ENCODE measurements at regions of chr10 and their contacts with region 1.

Region 1: DNA sequence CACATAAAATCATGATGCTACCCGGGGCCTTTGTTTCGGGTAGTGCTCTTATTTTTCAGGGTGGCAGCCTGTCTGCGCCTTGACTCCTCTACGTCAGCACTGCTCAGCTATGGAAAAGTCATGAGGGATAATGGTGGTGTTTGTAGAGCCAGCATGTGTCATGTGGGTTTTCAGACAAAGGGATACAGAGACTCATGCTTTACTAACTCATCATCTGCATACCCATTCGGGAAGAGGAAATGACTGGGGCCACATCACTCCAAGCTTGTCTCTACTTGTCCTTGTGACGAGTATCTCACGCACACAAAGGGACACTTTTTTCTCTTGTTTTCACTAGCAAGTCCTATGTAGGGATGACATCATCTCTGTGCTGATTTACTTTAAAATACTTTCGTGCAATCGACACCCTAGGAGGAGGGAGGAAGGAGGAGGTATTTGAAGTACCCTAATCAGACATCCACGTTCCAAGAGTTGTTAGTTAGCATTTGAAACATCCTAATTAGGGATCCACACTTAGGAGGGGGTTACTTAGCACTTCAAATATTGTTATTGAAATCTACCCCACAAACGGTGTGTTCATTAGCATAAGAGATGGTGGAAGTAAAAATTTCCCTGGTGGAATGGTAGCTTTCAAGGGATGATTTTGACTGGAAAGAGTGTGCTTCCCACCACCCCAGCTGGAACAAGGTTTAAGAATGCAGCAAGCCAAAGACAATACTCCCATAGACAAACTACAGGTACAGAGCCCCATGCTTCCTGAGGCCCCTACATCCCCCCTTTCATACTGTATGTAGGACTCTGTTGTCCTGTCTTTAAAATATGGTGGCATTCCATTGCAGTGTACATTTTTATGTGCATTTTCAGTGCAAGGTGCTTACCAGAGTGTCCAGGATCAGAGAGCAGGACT is 52.0 kb downstream of the THNSL1 start:
- DNase-seq: peak; percentile 100
- H3K4me3 ChIP-seq: no peak overlapping the region
- H3K27ac ChIP-seq: peak overlapping the region; percentile 100
- H3K4me1 ChIP-seq: peaks cover 18% of the 10 kb centered on the region
- H3K27me3 ChIP-seq: no peaks in the 10 kb centered on the region
- CTCF ChIP-seq: no peak

Region 2: DNA sequence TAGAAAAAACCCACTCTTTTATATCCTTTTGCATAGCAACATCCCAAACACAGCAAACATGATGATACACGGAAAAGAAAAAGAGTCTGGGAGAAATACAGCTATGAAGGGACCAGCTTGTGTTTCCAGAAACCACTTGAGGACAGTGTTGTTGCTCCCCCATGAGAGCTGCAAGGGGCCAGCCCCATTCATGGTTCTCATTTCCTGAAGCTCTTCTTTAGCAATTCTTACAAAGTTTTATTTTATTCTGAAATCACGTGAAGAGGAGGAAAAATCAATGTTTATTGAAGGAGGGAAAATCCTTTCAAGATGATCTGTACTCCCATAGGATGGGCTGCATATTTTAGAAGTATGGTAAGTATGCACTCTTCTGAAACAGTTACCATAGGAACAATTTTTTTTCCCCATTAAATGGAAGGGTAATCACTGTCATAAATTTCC is 98.5 kb before region 1 on chr10:
- CTCF ChIA-PET with region 1: no interaction called
- dilution Hi-C with region 1: loop called (anchors 5 kb)
- in situ Hi-C with region 1: no loop called
- intact Hi-C with region 1: no loop called
- DNase-seq: no peak
- H3K4me3 ChIP-seq: no peak overlapping the region
- H3K27ac ChIP-seq: no peak overlapping the region
- H3K4me1 ChIP-seq: peaks cover 4% of the 10 kb centered on the region
- H3K27me3 ChIP-seq: no peaks in the 10 kb centered on the region
- CTCF ChIP-seq: no peak

Region 3: DNA sequence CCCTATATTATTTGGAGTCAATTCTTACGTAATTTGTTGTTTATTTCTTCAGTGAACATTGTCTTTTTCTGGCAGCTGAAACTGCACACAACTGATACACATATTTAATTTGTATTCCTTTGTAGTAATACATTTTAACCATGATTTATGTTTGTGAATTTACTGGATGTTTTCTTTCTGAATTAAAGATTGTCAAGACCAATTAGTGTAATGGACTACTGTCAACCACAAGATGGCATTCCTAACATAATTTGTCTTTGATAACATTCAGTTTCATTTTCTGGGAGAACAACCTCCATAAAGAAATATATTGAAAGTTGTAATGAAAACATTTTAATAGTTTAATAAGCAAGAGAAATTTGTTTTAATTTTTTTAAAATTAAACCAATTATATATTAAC is 41.9 kb before region 1 on chr10:
- CTCF ChIA-PET with region 1: no interaction called
- dilution Hi-C with region 1: no loop called
- in situ Hi-C with region 1: loop called in 1 of 2 experiments (anchors 5 kb)
- intact Hi-C with region 1: no loop called
- DNase-seq: no peak
- H3K4me3 ChIP-seq: no peak overlapping the region
- H3K27ac ChIP-seq: no peak overlapping the region
- H3K4me1 ChIP-seq: no peaks in the 10 kb centered on the region
- H3K27me3 ChIP-seq: no peaks in the 10 kb centered on the region
- CTCF ChIP-seq: peak; percentile 41 to 53